IMR-90 (cell line): ENCODE measurements at regions of chr12 and their contacts with region 1.

Region 1: DNA sequence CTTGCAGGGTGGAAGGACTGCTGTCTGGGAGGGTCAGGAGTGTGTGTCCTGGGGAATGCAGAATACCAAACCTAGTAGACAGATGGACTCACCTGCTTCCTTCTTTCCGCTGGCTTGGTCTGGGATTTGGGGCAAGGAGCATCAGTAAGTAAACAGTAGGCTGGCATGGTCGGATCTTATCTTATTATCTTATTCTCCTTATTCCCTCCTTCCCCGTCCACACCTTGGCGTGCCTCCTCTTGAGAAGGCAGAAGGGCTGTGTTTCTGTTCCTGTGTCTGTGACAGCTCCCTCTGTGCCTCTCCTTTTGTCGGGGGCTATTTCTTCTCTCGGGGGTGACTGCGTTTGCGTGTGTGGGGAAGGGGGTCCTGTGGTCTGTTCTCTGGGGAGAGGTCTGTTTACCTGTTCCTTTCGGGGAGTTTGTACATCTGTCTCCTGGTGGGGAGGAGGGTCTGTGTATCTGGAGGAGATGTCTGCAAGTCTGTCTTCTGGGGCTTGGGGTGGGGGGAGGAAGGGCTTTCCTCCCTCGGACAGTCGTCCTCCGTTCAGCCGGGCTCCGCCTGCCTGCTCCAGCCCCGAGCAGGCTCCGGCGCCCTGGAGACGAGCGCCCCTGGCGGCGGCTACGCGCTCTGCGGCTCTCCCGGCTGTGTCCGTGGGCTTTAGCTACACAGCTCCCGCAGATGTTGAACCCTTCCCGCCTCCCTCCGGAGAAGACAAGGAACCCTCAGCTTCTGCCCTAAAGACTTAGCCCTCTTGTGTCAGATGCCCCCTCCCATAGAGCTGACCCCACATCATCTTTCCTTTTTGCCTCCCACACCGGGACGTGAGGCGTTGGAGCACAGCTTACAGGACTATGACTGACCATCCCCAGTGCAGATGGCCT is 4.3 kb downstream of the KRT86 start:
- DNase-seq: peak; percentile 65
- ATAC-seq: peak; percentile 88
- H3K4me3 ChIP-seq: no peak overlapping the region
- H3K27ac ChIP-seq: peak overlapping the region; percentile 91
- H3K4me1 ChIP-seq: peaks cover 24% of the 10 kb centered on the region
- H3K27me3 ChIP-seq: peaks cover 2% of the 10 kb centered on the region; the same call in 1 of the 2 replicates
- CTCF ChIP-seq: peak; percentile 97
- POLR2A ChIP-seq: 0 out of 2 replicates have a peak, but pooled peaks have one; percentile 35
- RAD21 ChIP-seq: peak; percentile 88

Region 2: DNA sequence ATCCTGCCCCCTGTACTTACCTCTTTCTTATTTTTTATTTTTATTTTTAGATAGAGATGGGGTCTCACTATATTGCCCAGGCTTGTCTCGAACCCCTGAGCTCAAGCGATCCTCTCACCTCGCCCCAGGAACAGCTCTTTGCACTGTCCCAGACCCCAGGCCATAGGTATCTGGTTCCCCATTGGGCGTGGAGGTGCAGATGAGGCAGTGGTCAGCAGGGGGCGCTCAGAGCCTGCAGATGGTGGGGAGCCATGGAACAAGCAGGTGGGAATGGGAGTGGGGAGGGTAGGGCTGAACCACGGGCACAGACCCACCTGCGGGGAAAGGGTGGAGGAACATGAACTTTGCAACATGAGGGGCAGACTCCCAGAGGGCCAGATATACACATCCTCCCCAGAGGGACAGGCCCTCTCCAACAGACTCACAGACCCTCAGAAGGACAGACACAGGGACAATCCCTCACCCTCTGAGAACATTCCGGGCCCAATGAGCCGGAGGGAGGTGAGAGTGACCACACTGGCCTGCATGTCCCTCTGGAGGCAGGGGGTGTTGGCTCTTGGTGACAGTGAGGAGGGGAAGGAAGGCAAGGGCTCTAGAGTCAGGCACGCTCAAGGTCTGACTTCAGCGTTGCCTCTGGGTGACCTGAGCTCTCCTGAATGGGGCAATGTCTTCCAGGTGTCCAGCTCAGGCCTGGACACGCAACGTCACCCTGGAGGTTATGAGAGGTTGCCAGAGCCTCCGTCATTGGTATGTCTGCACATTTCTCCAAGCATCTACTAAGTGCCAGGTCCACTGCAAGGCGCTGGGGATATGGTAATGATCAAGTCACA is 121.8 kb before region 1 on chr12:
- CTCF ChIA-PET with region 1: interaction called, 3 read pairs
- POLR2A ChIA-PET with region 1: no interaction called
- dilution Hi-C with region 1: no loop called
- in situ Hi-C with region 1: no loop called
- intact Hi-C with region 1: loop called (anchors 1 kb)
- DNase-seq: peak; percentile 42
- ATAC-seq: peak; percentile 83
- H3K4me3 ChIP-seq: no peak overlapping the region
- H3K27ac ChIP-seq: no peak overlapping the region
- H3K4me1 ChIP-seq: no peaks in the 10 kb centered on the region
- H3K27me3 ChIP-seq: no peaks in the 10 kb centered on the region
- CTCF ChIP-seq: peak; percentile 97
- POLR2A ChIP-seq: peak; percentile 55; the same call in 1 of the 2 replicates
- RAD21 ChIP-seq: peak; percentile 98

Region 3: DNA sequence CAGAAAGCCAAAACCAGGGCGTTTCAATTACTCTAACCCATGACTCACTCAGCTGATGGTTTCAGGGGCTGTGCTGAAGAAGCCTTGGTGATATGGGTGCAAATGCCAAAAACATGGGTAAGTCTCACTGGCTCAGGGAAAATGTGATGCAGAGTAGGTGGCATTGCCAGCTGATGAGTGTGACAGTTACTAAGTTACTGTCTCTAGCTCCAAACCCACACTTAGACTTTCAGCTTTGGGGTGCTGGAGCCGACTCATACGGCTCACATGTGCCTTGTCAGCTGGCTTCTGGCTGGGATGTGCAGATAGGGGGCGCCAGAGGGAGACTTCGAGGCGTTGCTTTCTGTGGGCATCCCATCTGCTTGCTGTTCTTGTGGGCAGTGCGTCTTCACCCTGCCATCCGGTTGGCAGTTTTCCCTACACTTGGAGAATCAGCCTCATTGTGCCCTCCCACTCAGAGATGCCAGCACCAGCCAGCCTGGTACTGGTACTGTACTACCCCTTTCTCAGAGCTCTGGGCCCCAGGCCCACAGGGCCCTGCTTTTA is 56.8 kb before region 1 on chr12:
- CTCF ChIA-PET with region 1: interaction called, 14 read pairs
- POLR2A ChIA-PET with region 1: no interaction called
- dilution Hi-C with region 1: no loop called
- in situ Hi-C with region 1: no loop called
- intact Hi-C with region 1: no loop called
- DNase-seq: peak; percentile 25
- ATAC-seq: peak; percentile 37
- H3K4me3 ChIP-seq: no peak overlapping the region
- H3K27ac ChIP-seq: no peak overlapping the region
- H3K4me1 ChIP-seq: peaks cover 9% of the 10 kb centered on the region; the same call in 1 of the 2 replicates
- H3K27me3 ChIP-seq: no peaks in the 10 kb centered on the region
- CTCF ChIP-seq: peak; percentile 50
- POLR2A ChIP-seq: no peak
- RAD21 ChIP-seq: peak; percentile 33

Region 4: GRCh38 chr12:52235822-52236692 is 42.7 kb before region 1 on chr12:
- CTCF ChIA-PET with region 1: interaction called, 14 read pairs
- POLR2A ChIA-PET with region 1: interaction called, 3 read pairs
- dilution Hi-C with region 1: no loop called
- in situ Hi-C with region 1: no loop called
- intact Hi-C with region 1: loop called (anchors 5 kb)
- DNase-seq: no peak
- ATAC-seq: no peak
- H3K4me3 ChIP-seq: no peak overlapping the region
- H3K27ac ChIP-seq: no peak overlapping the region
- H3K4me1 ChIP-seq: peaks cover 8% of the 10 kb centered on the region
- H3K27me3 ChIP-seq: no peaks in the 10 kb centered on the region
- CTCF ChIP-seq: no peak
- POLR2A ChIP-seq: no peak
- RAD21 ChIP-seq: no peak

Region 5: GRCh38 chr12:52327052-52327829 is 48.5 kb after region 1 on chr12:
- CTCF ChIA-PET with region 1: interaction called, 5 read pairs
- POLR2A ChIA-PET with region 1: no interaction called
- dilution Hi-C with region 1: no loop called
- in situ Hi-C with region 1: no loop called
- intact Hi-C with region 1: loop called (anchors 2 kb)
- DNase-seq: peak; percentile 91
- ATAC-seq: peak; percentile 98
- H3K4me3 ChIP-seq: no peak overlapping the region
- H3K27ac ChIP-seq: no peak overlapping the region
- H3K4me1 ChIP-seq: no peaks in the 10 kb centered on the region
- H3K27me3 ChIP-seq: peaks cover 55% of the 10 kb centered on the region
- CTCF ChIP-seq: peak; percentile 99; the same call in 1 of the 2 replicates
- POLR2A ChIP-seq: no peak
- RAD21 ChIP-seq: peak; percentile 96

Region 6: GRCh38 chr12:52860063-52860823 is 581.5 kb after region 1 on chr12:
- CTCF ChIA-PET with region 1: no interaction called
- POLR2A ChIA-PET with region 1: no interaction called
- dilution Hi-C with region 1: no loop called
- in situ Hi-C with region 1: no loop called
- intact Hi-C with region 1: no loop called
- DNase-seq: peak; percentile 52
- ATAC-seq: peak; percentile 78
- H3K4me3 ChIP-seq: no peak overlapping the region
- H3K27ac ChIP-seq: no peak overlapping the region
- H3K4me1 ChIP-seq: no peaks in the 10 kb centered on the region
- H3K27me3 ChIP-seq: peaks cover 19% of the 10 kb centered on the region
- CTCF ChIP-seq: no peak
- POLR2A ChIP-seq: no peak
- RAD21 ChIP-seq: no peak